ENCODE measurements at regions of chr2 and their contacts with region 1.

Region 1: DNA sequence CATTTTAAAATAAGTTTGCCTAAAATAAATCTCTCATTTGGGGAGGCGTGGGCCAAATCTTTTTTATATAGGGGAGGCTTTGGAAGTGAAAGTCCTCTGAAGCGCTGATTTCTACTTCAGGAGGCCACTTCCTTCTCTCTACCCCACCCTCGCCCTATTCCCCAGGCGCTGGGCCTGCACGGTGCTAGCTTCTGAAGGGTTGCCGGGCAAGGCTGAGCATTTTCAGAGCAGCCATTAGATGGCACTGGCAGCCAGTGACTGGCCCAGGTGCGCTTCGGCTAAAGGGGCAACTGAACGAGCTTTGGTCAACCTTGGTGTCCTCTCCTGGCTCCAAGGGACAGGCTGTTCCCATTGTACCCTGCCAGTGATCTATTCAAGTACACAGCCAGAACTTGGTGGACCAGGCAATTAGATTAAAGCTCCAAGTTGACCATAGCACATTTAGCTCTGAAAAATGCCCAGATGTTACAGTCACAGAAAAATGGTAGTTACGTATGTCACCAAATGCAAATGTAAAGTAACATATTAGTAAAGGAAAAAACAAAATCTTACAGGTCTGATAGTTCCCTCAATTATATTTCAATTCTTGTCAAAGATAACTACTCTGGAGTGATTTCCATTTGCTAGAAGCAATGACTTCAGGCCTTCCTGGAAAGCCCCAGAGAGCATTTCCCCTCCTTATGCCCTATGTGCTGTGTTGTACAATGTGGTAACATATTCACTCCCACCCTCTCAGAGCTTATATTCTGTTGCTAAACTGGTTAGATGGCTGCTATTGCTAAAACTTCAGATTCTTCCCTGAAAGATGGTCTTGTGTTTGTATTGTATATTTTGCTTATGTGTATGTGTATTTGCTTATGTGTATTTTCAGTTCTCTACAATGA is 2.1 kb downstream of the POMC start:
- DNase-seq: peak; percentile 49
- ATAC-seq: peak; percentile 97
- H3K4me3 ChIP-seq: no peak overlapping the region
- H3K27ac ChIP-seq: no peak overlapping the region
- H3K4me1 ChIP-seq: peaks cover 18% of the 10 kb centered on the region
- H3K27me3 ChIP-seq: peaks cover 5 to 14% of the 10 kb centered on the region in 2 experiments; a peak in 3 of 4 replicates
- CTCF ChIP-seq: peak; percentile 74 to 97 (median 79)
- EP300 ChIP-seq: no peak
- POLR2A ChIP-seq: no peak
- RAD21 ChIP-seq: peak; percentile 82

Region 2: DNA sequence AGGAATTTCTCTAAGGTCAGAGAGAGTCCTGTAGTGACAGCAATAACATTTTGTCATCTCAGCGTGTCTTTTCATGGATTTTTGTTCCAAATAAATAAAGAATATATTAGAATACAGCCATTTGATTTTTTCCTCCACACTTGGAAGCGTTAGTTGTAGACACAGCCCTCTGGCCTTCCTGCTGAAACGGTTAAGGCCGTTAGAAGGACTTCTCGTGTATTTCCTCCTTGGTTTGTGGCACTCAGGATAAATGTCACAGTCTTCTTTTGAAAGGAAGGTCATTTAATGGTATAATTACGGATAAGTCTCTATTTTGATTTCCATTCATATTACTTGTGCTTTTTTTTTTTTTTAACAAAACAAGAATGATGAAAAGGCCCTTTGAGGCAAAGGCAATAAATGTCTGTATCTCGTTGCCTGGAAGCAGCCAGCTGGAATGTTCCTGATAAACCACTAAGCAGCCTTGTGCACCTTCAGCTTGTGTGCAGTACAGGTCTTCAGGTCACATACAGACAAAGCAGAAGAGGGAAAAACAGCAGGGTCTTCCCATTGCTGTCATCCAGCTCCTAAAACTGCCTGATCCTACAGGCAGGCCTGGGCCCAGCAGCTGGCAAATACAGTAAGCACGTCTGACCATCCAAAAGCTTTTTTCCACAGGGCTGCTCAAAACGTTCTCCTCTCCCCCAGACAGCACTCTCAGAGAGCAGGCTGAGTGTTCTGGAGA is 110.0 kb before region 1 on chr2:
- CTCF ChIA-PET with region 1: no interaction called
- POLR2A ChIA-PET with region 1: no interaction called
- RAD21 ChIA-PET with region 1: no interaction called
- SMC1A ChIA-PET with region 1: no interaction called
- in situ Hi-C with region 1: no loop called
- intact Hi-C with region 1: no loop called
- DNase-seq: no peak
- ATAC-seq: no peak
- H3K4me3 ChIP-seq: no peak overlapping the region
- H3K27ac ChIP-seq: no peak overlapping the region
- H3K4me1 ChIP-seq: 0 out of 2 replicates have a peak, but pooled peaks cover 5% of the 10 kb centered on the region
- H3K27me3 ChIP-seq: no peaks in the 10 kb centered on the region; a peak in 1 of 4 replicates
- CTCF ChIP-seq: no peak
- EP300 ChIP-seq: no peak
- POLR2A ChIP-seq: no peak
- RAD21 ChIP-seq: no peak

Region 3: DNA sequence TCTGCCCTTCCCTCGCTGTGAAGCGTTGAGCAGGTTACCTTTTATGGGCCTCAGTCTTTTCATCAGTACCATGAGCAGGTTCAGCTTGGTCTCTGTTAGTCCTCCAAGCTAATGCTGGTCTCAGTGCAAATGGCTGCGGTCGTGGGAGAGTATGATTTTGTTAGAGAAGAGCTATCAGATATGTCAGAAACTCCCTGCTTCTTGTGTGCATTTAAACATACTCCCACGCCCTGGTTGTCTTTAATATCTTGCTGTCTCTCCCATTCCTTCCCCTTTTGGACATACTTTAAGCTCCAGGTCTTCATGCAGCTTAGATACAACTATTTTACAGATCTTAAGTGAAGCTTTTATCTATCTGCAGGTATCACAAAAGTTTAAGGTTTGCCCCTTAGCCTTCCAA is 61.5 kb before region 1 on chr2:
- CTCF ChIA-PET with region 1: no interaction called
- POLR2A ChIA-PET with region 1: no interaction called
- RAD21 ChIA-PET with region 1: no interaction called
- SMC1A ChIA-PET with region 1: no interaction called
- in situ Hi-C with region 1: no loop called
- intact Hi-C with region 1: no loop called
- DNase-seq: no peak
- ATAC-seq: no peak
- H3K4me3 ChIP-seq: no peak overlapping the region
- H3K27ac ChIP-seq: no peak overlapping the region
- H3K4me1 ChIP-seq: no peaks in the 10 kb centered on the region
- H3K27me3 ChIP-seq: no peaks in the 10 kb centered on the region
- CTCF ChIP-seq: no peak
- EP300 ChIP-seq: no peak
- POLR2A ChIP-seq: no peak
- RAD21 ChIP-seq: no peak

Region 4: GRCh38 chr2:25151718-25152117 is 14.5 kb before region 1 on chr2:
- CTCF ChIA-PET with region 1: interaction called, 13 read pairs
- POLR2A ChIA-PET with region 1: no interaction called
- RAD21 ChIA-PET with region 1: interaction called, 5 read pairs
- SMC1A ChIA-PET with region 1: no interaction called
- in situ Hi-C with region 1: no loop called
- intact Hi-C with region 1: no loop called
- DNase-seq: no peak
- ATAC-seq: no peak
- H3K4me3 ChIP-seq: no peak overlapping the region
- H3K27ac ChIP-seq: no peak overlapping the region
- H3K4me1 ChIP-seq: no peaks in the 10 kb centered on the region
- H3K27me3 ChIP-seq: no peaks in the 10 kb centered on the region; a peak in 2 of 4 replicates
- CTCF ChIP-seq: no peak
- EP300 ChIP-seq: no peak
- POLR2A ChIP-seq: no peak
- RAD21 ChIP-seq: no peak

Region 5: GRCh38 chr2:25228848-25229278 is 62.6 kb after region 1 on chr2:
- CTCF ChIA-PET with region 1: interaction called, 46 read pairs
- POLR2A ChIA-PET with region 1: interaction called, 4 read pairs
- RAD21 ChIA-PET with region 1: interaction called, 12 read pairs
- SMC1A ChIA-PET with region 1: interaction called, 48 read pairs
- in situ Hi-C with region 1: no loop called
- intact Hi-C with region 1: loop called (anchors 2 kb)
- DNase-seq: no peak
- ATAC-seq: peak; percentile 64
- H3K4me3 ChIP-seq: no peak overlapping the region
- H3K27ac ChIP-seq: no peak overlapping the region
- H3K4me1 ChIP-seq: peaks cover 29% of the 10 kb centered on the region
- H3K27me3 ChIP-seq: no peaks in the 10 kb centered on the region
- CTCF ChIP-seq: peak; percentile 60 to 82 (median 63)
- EP300 ChIP-seq: no peak
- POLR2A ChIP-seq: no peak
- RAD21 ChIP-seq: peak; percentile 55

Region 6: DNA sequence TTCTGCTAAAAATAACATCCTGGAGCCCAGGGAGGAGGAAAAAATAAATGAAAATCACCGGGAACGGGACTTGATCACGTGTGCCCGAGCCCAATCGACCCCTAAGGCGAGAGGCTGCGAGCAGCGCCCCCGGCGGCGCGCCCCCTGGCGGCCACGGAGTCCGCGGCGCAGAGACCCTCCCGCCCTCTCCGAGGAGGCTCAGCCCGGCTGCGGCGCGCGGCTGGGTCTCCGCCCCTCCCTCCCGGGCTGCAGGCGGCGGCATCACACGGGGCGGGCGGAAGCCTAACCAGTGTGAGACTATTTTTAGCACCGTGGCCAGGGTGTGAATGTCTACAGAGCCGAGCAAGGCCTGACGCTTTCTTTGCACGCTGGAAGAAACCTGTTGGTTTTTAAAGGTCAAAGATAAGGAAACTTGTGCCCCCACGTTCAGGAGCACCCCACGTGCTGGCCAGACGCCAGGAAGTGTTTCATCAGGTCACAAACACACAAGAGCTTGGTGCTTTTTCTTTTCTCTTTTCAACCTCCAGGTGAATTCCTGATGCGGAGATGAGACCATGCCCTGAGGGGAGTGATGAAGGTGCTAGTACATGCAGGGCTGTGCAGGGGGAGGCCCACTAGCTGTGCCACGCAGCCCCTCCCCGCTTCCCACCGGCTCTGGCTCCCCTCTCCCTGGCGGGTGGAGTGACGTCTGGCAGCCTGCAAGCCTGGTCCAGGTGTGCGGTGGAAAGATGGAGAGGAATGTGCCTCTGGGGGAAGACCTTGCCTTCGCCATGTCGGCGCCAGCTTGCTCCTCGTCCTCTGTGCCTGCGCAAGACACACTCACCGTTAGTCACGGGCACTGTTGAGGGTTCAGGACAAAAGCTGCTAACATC is 210.8 kb after region 1 on chr2:
- CTCF ChIA-PET with region 1: interaction called, 14 read pairs
- POLR2A ChIA-PET with region 1: no interaction called
- RAD21 ChIA-PET with region 1: interaction called, 7 read pairs
- SMC1A ChIA-PET with region 1: interaction called, 3 read pairs
- in situ Hi-C with region 1: no loop called
- intact Hi-C with region 1: no loop called
- DNase-seq: peak; percentile 91
- ATAC-seq: peak; percentile 97
- H3K4me3 ChIP-seq: no peak overlapping the region
- H3K27ac ChIP-seq: peak overlapping the region; percentile 80
- H3K4me1 ChIP-seq: peaks cover 39% of the 10 kb centered on the region
- H3K27me3 ChIP-seq: no peaks in the 10 kb centered on the region
- CTCF ChIP-seq: peak; percentile 75 to 96 (median 92); a peak in 5 of 6 replicates
- EP300 ChIP-seq: peak; percentile 86 to 94
- POLR2A ChIP-seq: peak; percentile 58; the same call in 1 of the 2 replicates
- RAD21 ChIP-seq: peak; percentile 76

Region 7: DNA sequence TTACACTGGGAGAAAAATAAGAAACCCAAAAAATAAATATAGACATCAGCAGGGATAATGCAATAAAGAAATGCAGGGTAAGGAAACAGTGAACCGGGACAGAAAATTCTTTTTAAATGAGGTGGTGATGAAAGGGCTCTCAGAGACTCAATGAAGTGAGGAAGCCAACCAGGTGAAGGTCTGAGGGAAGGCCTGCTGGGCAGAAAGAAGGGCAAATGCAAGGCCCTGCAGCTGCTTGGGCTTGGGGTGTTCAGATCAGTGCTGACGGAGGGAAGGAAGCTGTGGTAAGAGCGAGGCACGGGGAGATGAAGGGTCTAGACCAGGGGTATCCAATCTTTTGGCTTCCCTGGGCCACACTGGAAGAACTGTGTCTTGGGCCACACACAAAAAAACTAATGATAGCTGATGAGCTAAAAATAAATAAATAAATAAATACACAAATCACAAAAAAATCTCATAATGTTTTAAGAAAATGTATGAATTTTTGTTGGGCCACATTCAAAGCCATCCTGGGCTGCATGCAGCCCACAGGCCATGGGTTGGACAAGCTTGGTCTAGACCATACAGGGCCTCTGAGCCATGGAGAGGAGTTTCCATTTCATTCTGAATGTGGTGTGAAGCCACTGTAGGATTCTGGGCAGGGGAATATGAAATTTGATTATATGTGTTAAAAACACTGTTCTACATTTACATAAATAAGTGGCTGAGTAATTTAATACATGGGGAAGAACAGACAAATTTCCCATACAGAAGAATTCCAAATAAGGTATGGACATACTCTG is 271.8 kb after region 1 on chr2:
- CTCF ChIA-PET with region 1: no interaction called
- POLR2A ChIA-PET with region 1: no interaction called
- RAD21 ChIA-PET with region 1: no interaction called
- SMC1A ChIA-PET with region 1: no interaction called
- in situ Hi-C with region 1: no loop called
- intact Hi-C with region 1: no loop called
- DNase-seq: no peak
- ATAC-seq: peak; percentile 52; the same call in 2 of the 3 replicates
- H3K4me3 ChIP-seq: no peak overlapping the region
- H3K27ac ChIP-seq: no peak overlapping the region
- H3K4me1 ChIP-seq: peaks cover 7% of the 10 kb centered on the region; the same call in 1 of the 2 replicates
- H3K27me3 ChIP-seq: no peaks in the 10 kb centered on the region
- CTCF ChIP-seq: no peak
- EP300 ChIP-seq: no peak
- POLR2A ChIP-seq: no peak
- RAD21 ChIP-seq: no peak

Region 8: DNA sequence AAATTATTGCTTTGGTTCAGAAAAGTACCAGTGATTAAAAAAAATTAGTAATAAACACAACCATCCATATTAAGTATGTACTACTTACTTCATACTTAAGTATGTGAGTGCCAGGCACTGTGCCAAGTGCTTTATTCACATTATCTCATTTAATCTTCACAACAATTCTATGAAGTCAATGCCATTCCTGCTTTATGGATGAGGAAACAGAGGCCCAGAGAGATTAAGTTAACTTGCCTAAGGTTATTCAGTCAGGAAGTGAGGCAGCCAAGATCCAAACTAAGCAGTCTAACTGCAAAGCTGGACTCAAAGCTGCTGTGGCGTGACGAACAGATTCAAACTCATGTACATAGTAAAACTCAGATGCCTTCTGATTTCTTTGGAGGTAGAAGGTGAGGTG is 484.8 kb after region 1 on chr2:
- CTCF ChIA-PET with region 1: interaction called, 13 read pairs
- POLR2A ChIA-PET with region 1: no interaction called
- RAD21 ChIA-PET with region 1: no interaction called
- SMC1A ChIA-PET with region 1: no interaction called
- in situ Hi-C with region 1: no loop called
- intact Hi-C with region 1: no loop called
- DNase-seq: no peak
- ATAC-seq: no peak
- H3K4me3 ChIP-seq: no peak overlapping the region
- H3K27ac ChIP-seq: no peak overlapping the region
- H3K4me1 ChIP-seq: no peaks in the 10 kb centered on the region
- H3K27me3 ChIP-seq: no peaks in the 10 kb centered on the region
- CTCF ChIP-seq: no peak
- EP300 ChIP-seq: no peak
- POLR2A ChIP-seq: no peak
- RAD21 ChIP-seq: no peak

Region 9: GRCh38 chr2:25700221-25700660 is 534.0 kb after region 1 on chr2:
- CTCF ChIA-PET with region 1: interaction called, 16 read pairs
- POLR2A ChIA-PET with region 1: no interaction called
- RAD21 ChIA-PET with region 1: interaction called, 3 read pairs
- SMC1A ChIA-PET with region 1: no interaction called
- in situ Hi-C with region 1: no loop called
- intact Hi-C with region 1: no loop called
- DNase-seq: no peak
- ATAC-seq: peak; percentile 86
- H3K4me3 ChIP-seq: no peak overlapping the region
- H3K27ac ChIP-seq: no peak overlapping the region
- H3K4me1 ChIP-seq: no peaks in the 10 kb centered on the region
- H3K27me3 ChIP-seq: peaks cover 4 to 5% of the 10 kb centered on the region in 2 experiments; a peak in 2 of 4 replicates
- CTCF ChIP-seq: peak; percentile 69 to 80 (median 70)
- EP300 ChIP-seq: no peak
- POLR2A ChIP-seq: no peak
- RAD21 ChIP-seq: peak; percentile 65

Measured in GM12878 (cell line).